Cardiac septum (tissue), 1 donor: ENCODE measurements at regions of chr3 and their contacts with region 1.

Region 1: DNA sequence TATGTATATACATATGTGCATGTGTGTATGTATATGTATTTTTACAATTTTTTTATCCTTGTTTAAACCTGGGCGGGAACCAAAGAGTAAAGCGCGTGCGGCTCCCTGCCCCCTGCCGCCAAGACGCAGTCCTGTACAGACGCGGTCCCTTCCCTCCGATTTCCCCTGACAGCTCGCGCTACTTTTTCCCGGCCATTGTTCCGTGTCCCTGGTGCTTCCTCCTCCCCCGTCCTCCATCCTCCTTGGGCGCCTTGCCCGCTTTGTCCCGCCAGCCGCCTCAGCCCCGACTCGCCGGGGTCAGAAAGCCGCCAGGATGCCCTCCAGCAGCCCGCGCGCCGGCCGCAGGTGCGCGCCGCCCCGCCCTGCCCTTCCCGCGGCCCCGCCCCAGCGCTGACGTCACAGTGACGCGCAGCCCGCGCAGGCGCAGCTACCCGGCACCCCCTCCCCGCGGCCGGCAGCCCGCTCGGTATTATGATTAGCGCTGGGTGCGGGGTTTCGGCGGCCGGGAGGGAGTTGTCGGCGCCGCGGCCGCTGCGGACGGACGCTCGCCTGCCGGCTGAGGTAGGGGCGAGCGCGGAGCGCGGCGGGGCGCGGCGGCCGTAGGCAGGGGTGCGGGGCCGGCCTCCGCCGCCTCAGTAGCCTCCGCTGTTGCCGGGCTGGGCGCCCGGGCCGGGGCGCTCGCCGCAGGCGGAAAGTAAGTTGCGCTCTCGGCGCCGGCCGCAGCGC is at the start of gene SNRK:
- DNase-seq: peak; percentile 98
- total RNA-seq, gene SNRK: 25.1 TPM

Region 2: DNA sequence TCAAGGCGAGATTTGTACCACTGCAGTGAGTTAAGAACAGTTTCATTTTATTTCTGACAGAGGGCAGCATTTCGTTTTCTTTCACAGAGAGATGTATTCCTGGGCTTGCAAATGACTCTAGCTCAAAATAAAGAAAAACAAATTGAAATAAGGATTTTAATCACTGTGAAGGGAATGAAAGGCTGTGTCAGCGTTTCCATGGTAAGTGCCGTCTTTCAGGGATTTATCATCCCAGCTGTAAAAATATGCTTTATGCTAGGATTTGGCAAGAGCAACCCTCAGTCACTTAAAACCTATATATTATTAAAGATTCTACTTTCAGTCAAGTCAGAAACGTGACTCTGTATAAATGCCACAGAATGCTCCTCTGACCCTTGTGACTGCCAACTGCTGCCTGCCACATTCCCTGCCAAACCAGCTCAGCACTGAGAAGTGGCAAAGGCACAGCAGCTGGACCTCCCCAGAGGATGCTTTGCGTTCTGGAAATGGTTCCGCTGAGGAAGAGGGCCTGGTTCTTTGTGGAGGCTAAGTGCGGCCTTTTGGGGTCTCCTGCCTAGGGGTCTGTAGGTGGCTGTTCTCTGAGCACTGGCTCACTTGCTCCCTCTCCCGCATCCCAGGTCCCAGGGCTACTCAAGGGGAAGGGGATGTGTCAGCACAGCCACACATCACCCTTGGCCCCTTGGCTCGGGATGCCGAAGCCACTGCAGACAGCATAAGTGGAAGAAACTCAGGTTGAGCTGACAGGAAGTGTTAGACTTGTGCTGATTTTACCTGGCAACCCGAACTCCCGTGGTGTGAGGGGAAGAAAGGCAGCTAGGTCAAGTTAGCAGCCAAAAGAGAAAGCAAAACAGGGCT is 123.8 kb before region 1 on chr3:
- intact Hi-C with region 1: loop called (anchors 5 kb)
- DNase-seq: no peak

Region 3: GRCh38 chr3:43246976-43247375 is 39.3 kb before region 1 on chr3:
- intact Hi-C with region 1: loop called (anchors 2 kb)
- DNase-seq: no peak

Region 4: GRCh38 chr3:43389388-43390254 is 103.3 kb after region 1 on chr3:
- intact Hi-C with region 1: loop called (anchors 5 kb)
- DNase-seq: peak; percentile 88